Naive thymus-derived CD4-positive, alpha-beta T cell (primary cell): ENCODE measurements at regions of chr17 and their contacts with region 1.

Region 1: GRCh38 chr17:31900877-31901276 is 631 bp downstream of the UTP6 start:
- DNase-seq: peak in 1 of 9 donors; percentile 9
- ATAC-seq: no peak
- H3K4me3 ChIP-seq: peak overlapping the region; percentile 80
- H3K4me3 Mint-ChIP-seq: no peak overlapping the region
- H3K27ac ChIP-seq: peak overlapping the region; percentile 81
- H3K27ac Mint-ChIP-seq: no peak overlapping the region
- H3K4me1 ChIP-seq: peaks cover 0 to 10% of the 10 kb centered on the region in 2 donors
- H3K4me1 Mint-ChIP-seq: peaks cover 0 to 25% (median 9%) of the 10 kb centered on the region in 7 donors
- H3K27me3 ChIP-seq: no peaks in the 10 kb centered on the region
- H3K27me3 Mint-ChIP-seq: no peaks in the 10 kb centered on the region

Region 2: GRCh38 chr17:31508288-31509094 is 392.4 kb before region 1 on chr17:
- CTCF ChIA-PET with region 1: no interaction called
- POLR2A ChIA-PET with region 1: interaction called, 3 read pairs
- intact Hi-C with region 1: loop called in 1 of 2 experiments (anchors 1 kb)
- DNase-seq: peak in 8 of 9 donors; percentile 66 to 90 (median 85)
- ATAC-seq: peak; percentile 95
- H3K4me3 ChIP-seq: peak overlapping the region; percentile 62
- H3K4me3 Mint-ChIP-seq: peak overlapping the region; percentile 79 to 95 (median 90)
- H3K27ac ChIP-seq: peak overlapping the region; percentile 86
- H3K27ac Mint-ChIP-seq: peak overlapping the region; percentile 94 to 100 (median 97)
- H3K4me1 ChIP-seq: peaks cover 53 to 55% of the 10 kb centered on the region in 2 donors
- H3K4me1 Mint-ChIP-seq: peaks cover 50 to 80% (median 69%) of the 10 kb centered on the region in 7 donors
- H3K27me3 ChIP-seq: no peaks in the 10 kb centered on the region
- H3K27me3 Mint-ChIP-seq: no peaks in the 10 kb centered on the region

Region 3: GRCh38 chr17:31522284-31522931 is 378.5 kb before region 1 on chr17:
- CTCF ChIA-PET with region 1: no interaction called
- POLR2A ChIA-PET with region 1: no interaction called
- intact Hi-C with region 1: no loop called
- DNase-seq: no peak
- ATAC-seq: no peak
- H3K4me3 ChIP-seq: no peak overlapping the region
- H3K4me3 Mint-ChIP-seq: no peak overlapping the region
- H3K27ac ChIP-seq: no peak overlapping the region
- H3K27ac Mint-ChIP-seq: peak overlapping the region in 1 of 9 donors; percentile 27
- H3K4me1 ChIP-seq: no peaks in the 10 kb centered on the region
- H3K4me1 Mint-ChIP-seq: peaks cover 0 to 6% (median 5%) of the 10 kb centered on the region in 7 donors
- H3K27me3 ChIP-seq: no peaks in the 10 kb centered on the region
- H3K27me3 Mint-ChIP-seq: no peaks in the 10 kb centered on the region

Region 4: GRCh38 chr17:31811101-31811500 is 89.8 kb before region 1 on chr17:
- CTCF ChIA-PET with region 1: no interaction called
- POLR2A ChIA-PET with region 1: no interaction called
- intact Hi-C with region 1: no loop called
- DNase-seq: no peak
- ATAC-seq: no peak
- H3K4me3 ChIP-seq: no peak overlapping the region
- H3K4me3 Mint-ChIP-seq: no peak overlapping the region
- H3K27ac ChIP-seq: no peak overlapping the region
- H3K27ac Mint-ChIP-seq: no peak overlapping the region
- H3K4me1 ChIP-seq: no peaks in the 10 kb centered on the region
- H3K4me1 Mint-ChIP-seq: peaks cover 0 to 3% (median 0%) of the 10 kb centered on the region in 7 donors
- H3K27me3 ChIP-seq: no peaks in the 10 kb centered on the region
- H3K27me3 Mint-ChIP-seq: peaks cover 7 to 19% (median 9%) of the 10 kb centered on the region in 5 donors

Region 5: GRCh38 chr17:31858642-31859473 is 42.0 kb before region 1 on chr17 and contains the start of gene COPRS:
- CTCF ChIA-PET with region 1: interaction called, 3 read pairs
- POLR2A ChIA-PET with region 1: interaction called, 3 read pairs
- intact Hi-C with region 1: loop called (anchors 1 kb)
- DNase-seq: peak; percentile 46 to 83 (median 74)
- ATAC-seq: peak; percentile 97
- H3K4me3 ChIP-seq: peak within 1 kb of the TSS; percentile 60
- H3K4me3 Mint-ChIP-seq: peak within 1 kb of the TSS; percentile 79 to 93 (median 86)
- H3K27ac ChIP-seq: peak within 1 kb of the TSS; percentile 51
- H3K27ac Mint-ChIP-seq: peak within 1 kb of the TSS; percentile 3 to 87 (median 75)
- H3K4me1 ChIP-seq: peaks cover 0 to 7% of the 10 kb centered on the region in 2 donors
- H3K4me1 Mint-ChIP-seq: peaks cover 11 to 19% (median 15%) of the 10 kb centered on the region in 7 donors
- H3K27me3 ChIP-seq: no peaks in the 10 kb centered on the region
- H3K27me3 Mint-ChIP-seq: no peaks in the 10 kb centered on the region
- total RNA-seq, gene COPRS: 2.2 to 20.9 (median 4.2) TPM

Region 6: DNA sequence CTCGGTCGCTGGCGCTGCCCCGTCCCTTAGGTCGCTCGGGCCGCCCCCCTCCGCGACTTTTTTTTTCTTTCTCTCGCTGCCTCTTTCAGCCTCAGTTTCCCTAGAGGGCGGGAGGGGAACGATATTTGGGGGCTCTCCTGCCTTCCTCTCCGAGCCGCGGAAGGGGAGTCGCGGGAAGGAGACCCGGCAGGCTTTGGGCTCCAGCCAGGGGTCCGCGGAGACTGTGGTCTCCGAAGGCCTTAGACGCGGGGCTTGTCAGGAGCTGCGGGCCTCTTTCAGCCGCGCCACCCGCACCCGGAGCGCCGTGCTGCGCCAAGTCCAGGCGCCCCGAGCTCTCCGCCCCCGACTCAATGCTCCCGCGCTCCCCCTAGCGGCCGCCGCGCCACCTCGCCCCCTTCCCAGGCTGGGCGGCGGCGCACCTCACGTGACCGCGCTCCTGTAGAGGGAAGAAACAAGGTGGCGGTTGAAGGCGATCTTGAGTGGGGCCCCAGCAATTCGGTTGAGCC is 106.1 kb after region 1 on chr17 and contains the start of gene LRRC37B:
- CTCF ChIA-PET with region 1: no interaction called
- POLR2A ChIA-PET with region 1: interaction called, 3 read pairs
- intact Hi-C with region 1: loop called in 1 of 2 experiments (anchors 1 kb)
- DNase-seq: peak; percentile 80 to 95 (median 87)
- ATAC-seq: peak; percentile 98
- H3K4me3 ChIP-seq: peak within 1 kb of the TSS; percentile 97
- H3K4me3 Mint-ChIP-seq: peak within 1 kb of the TSS; percentile 86 to 98 (median 95)
- H3K27ac ChIP-seq: peak within 1 kb of the TSS; percentile 85
- H3K27ac Mint-ChIP-seq: peak within 1 kb of the TSS; percentile 87 to 98 (median 93)
- H3K4me1 ChIP-seq: peaks cover 9 to 14% of the 10 kb centered on the region in 2 donors
- H3K4me1 Mint-ChIP-seq: peaks cover 25 to 44% (median 35%) of the 10 kb centered on the region in 7 donors
- H3K27me3 ChIP-seq: no peaks in the 10 kb centered on the region
- H3K27me3 Mint-ChIP-seq: peaks cover 0 to 6% (median 0%) of the 10 kb centered on the region in 5 donors
- total RNA-seq, gene LRRC37B: 42.1 to 69.9 (median 56.2) TPM

Region 7: DNA sequence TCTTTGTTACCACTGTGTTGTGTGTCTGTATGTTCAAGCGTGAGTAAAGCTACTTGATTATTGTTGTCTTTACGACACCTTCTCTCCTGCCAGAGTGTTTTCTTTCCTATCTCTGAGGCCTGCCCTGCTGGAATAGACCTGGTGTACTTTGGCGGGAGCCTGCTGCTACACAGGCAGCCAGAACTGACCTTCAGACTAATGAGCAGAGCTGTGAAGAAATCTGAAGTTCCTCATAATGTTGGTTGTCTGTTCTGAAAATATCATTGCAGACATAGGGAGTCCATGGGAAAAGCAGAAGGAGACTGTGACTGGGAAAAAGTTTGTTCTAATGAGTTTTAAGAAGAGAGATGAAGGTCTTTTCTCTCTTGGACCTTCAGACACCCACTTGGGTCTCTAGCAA is 251.3 kb after region 1 on chr17:
- CTCF ChIA-PET with region 1: no interaction called
- POLR2A ChIA-PET with region 1: no interaction called
- intact Hi-C with region 1: no loop called
- DNase-seq: no peak
- ATAC-seq: no peak
- H3K4me3 ChIP-seq: no peak overlapping the region
- H3K4me3 Mint-ChIP-seq: no peak overlapping the region
- H3K27ac ChIP-seq: no peak overlapping the region
- H3K27ac Mint-ChIP-seq: no peak overlapping the region
- H3K4me1 ChIP-seq: peaks cover 0 to 4% of the 10 kb centered on the region in 2 donors
- H3K4me1 Mint-ChIP-seq: peaks cover 18 to 39% (median 34%) of the 10 kb centered on the region in 7 donors
- H3K27me3 ChIP-seq: no peaks in the 10 kb centered on the region
- H3K27me3 Mint-ChIP-seq: no peaks in the 10 kb centered on the region

Region 8: GRCh38 chr17:32331243-32332040 is 430.6 kb after region 1 on chr17:
- CTCF ChIA-PET with region 1: no interaction called
- POLR2A ChIA-PET with region 1: no interaction called
- intact Hi-C with region 1: no loop called
- DNase-seq: no peak
- ATAC-seq: no peak
- H3K4me3 ChIP-seq: no peak overlapping the region
- H3K4me3 Mint-ChIP-seq: peak overlapping the region in 4 of 10 donors; percentile 10 to 74 (median 46)
- H3K27ac ChIP-seq: peak overlapping the region; percentile 49
- H3K27ac Mint-ChIP-seq: peak overlapping the region; percentile 7 to 85 (median 51)
- H3K4me1 ChIP-seq: peaks cover 12 to 14% of the 10 kb centered on the region in 2 donors
- H3K4me1 Mint-ChIP-seq: peaks cover 12 to 51% (median 19%) of the 10 kb centered on the region in 7 donors
- H3K27me3 ChIP-seq: no peaks in the 10 kb centered on the region
- H3K27me3 Mint-ChIP-seq: no peaks in the 10 kb centered on the region

Region 9: GRCh38 chr17:32444308-32445073 is 543.6 kb after region 1 on chr17 and contains the start of gene PSMD11:
- CTCF ChIA-PET with region 1: no interaction called
- POLR2A ChIA-PET with region 1: no interaction called
- intact Hi-C with region 1: loop called in 1 of 2 experiments (anchors 1 kb)
- DNase-seq: peak; percentile 98 to 100 (median 99)
- ATAC-seq: peak; percentile 99
- H3K4me3 ChIP-seq: peak within 1 kb of the TSS; percentile 80
- H3K4me3 Mint-ChIP-seq: peak within 1 kb of the TSS; percentile 78 to 93 (median 86)
- H3K27ac ChIP-seq: peak within 1 kb of the TSS; percentile 94
- H3K27ac Mint-ChIP-seq: peak within 1 kb of the TSS; percentile 52 to 83 (median 78)
- H3K4me1 ChIP-seq: peaks cover 13 to 14% of the 10 kb centered on the region in 2 donors
- H3K4me1 Mint-ChIP-seq: peaks cover 25 to 46% (median 36%) of the 10 kb centered on the region in 7 donors
- H3K27me3 ChIP-seq: no peaks in the 10 kb centered on the region
- H3K27me3 Mint-ChIP-seq: peaks cover 0 to 23% (median 0%) of the 10 kb centered on the region in 5 donors
- total RNA-seq, gene PSMD11: 60.1 to 112 (median 67.5) TPM